Calu3 (cell line): ENCODE measurements at regions of chr2 and their contacts with region 1.

Region 1: GRCh38 chr2:202109737-202110184 is 36.7 kb downstream of the KIAA2012 start:
- DNase-seq: no peak
- H3K4me3 Mint-ChIP-seq: no peak overlapping the region
- H3K27ac Mint-ChIP-seq: no peak overlapping the region
- H3K4me1 Mint-ChIP-seq: peaks cover 20% of the 10 kb centered on the region
- H3K27me3 Mint-ChIP-seq: no peaks in the 10 kb centered on the region
- CTCF ChIP-seq: no peak

Region 2: DNA sequence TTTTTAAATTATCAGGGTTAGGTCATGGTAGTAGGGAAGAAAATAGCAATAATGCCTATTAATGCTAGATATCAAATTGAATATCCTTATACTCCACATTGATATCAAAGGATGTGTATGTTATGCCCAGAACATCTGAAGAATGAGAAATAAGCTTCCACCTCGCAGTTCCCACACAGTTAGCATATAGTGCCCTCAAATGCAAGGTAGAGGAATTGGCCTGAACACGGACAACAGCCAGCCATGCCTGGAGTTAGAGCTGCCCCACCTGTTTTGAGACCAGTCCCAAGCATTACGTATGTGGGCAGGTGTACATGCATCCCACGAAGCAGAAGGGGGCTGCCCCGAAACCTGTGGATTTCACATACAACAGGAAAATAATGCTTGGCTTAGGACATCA is 49.0 kb after region 1 on chr2:
- CTCF ChIA-PET with region 1: no interaction called
- intact Hi-C with region 1: loop called (anchors 5 kb)
- DNase-seq: peak; percentile 30
- H3K4me3 Mint-ChIP-seq: no peak overlapping the region
- H3K27ac Mint-ChIP-seq: no peak overlapping the region
- H3K4me1 Mint-ChIP-seq: no peaks in the 10 kb centered on the region
- H3K27me3 Mint-ChIP-seq: no peaks in the 10 kb centered on the region
- CTCF ChIP-seq: no peak